ENCODE measurements at regions of chr3 and their contacts with region 1.

Region 1: GRCh38 chr3:73502609-73503583 is 121.8 kb downstream of the PDZRN3 start:
- DNase-seq: peak; percentile 61
- H3K4me3 ChIP-seq: no peak overlapping the region
- H3K27ac ChIP-seq: peak overlapping the region; percentile 62
- H3K4me1 ChIP-seq: peaks cover 89% of the 10 kb centered on the region
- H3K27me3 ChIP-seq: no peaks in the 10 kb centered on the region
- CTCF ChIP-seq: peak; percentile 86

Region 2: GRCh38 chr3:73453666-73454065 is 49.2 kb before region 1 on chr3:
- intact Hi-C with region 1: loop called (anchors 2 kb)
- DNase-seq: no peak
- H3K4me3 ChIP-seq: no peak overlapping the region
- H3K27ac ChIP-seq: no peak overlapping the region
- H3K4me1 ChIP-seq: peaks cover 58% of the 10 kb centered on the region
- H3K27me3 ChIP-seq: no peaks in the 10 kb centered on the region
- CTCF ChIP-seq: no peak

Measured in left ventricle myocardium inferior (tissue), 1 donor.